ENCODE measurements at regions of chr4 and their contacts with region 1.

Region 1: GRCh38 chr4:99462875-99463464 is 27.8 kb upstream of the ADH7 start:
- DNase-seq: peak; percentile 70
- ATAC-seq: peak; percentile 84
- H3K4me3 Mint-ChIP-seq: no peak overlapping the region
- H3K27ac Mint-ChIP-seq: no peak overlapping the region
- H3K4me1 Mint-ChIP-seq: no peaks in the 10 kb centered on the region
- H3K27me3 Mint-ChIP-seq: no peaks in the 10 kb centered on the region

Region 2: GRCh38 chr4:98150092-98150761 is 1312.7 kb before region 1 on chr4:
- CTCF ChIA-PET with region 1: interaction called, 3 read pairs
- POLR2A ChIA-PET with region 1: no interaction called
- intact Hi-C with region 1: loop called in 1 of 2 experiments (anchors 5 kb)
- DNase-seq: no peak
- ATAC-seq: no peak
- H3K4me3 Mint-ChIP-seq: no peak overlapping the region
- H3K27ac Mint-ChIP-seq: no peak overlapping the region
- H3K4me1 Mint-ChIP-seq: peaks cover 6% of the 10 kb centered on the region
- H3K27me3 Mint-ChIP-seq: peaks cover 2% of the 10 kb centered on the region

Region 3: GRCh38 chr4:99117876-99118693 is 344.9 kb before region 1 on chr4:
- CTCF ChIA-PET with region 1: interaction called, 7 read pairs
- POLR2A ChIA-PET with region 1: no interaction called
- intact Hi-C with region 1: loop called (anchors 1 to 2 kb)
- DNase-seq: no peak
- ATAC-seq: no peak
- H3K4me3 Mint-ChIP-seq: no peak overlapping the region
- H3K27ac Mint-ChIP-seq: no peak overlapping the region
- H3K4me1 Mint-ChIP-seq: no peaks in the 10 kb centered on the region
- H3K27me3 Mint-ChIP-seq: no peaks in the 10 kb centered on the region

Region 4: GRCh38 chr4:99219479-99219878 is 243.5 kb before region 1 on chr4:
- CTCF ChIA-PET with region 1: no interaction called
- POLR2A ChIA-PET with region 1: no interaction called
- intact Hi-C with region 1: no loop called
- DNase-seq: no peak
- ATAC-seq: no peak
- H3K4me3 Mint-ChIP-seq: no peak overlapping the region
- H3K27ac Mint-ChIP-seq: no peak overlapping the region
- H3K4me1 Mint-ChIP-seq: no peaks in the 10 kb centered on the region
- H3K27me3 Mint-ChIP-seq: peaks cover 2% of the 10 kb centered on the region

Region 5: GRCh38 chr4:99447079-99447478 is 15.9 kb before region 1 on chr4:
- CTCF ChIA-PET with region 1: interaction called, 15 read pairs
- POLR2A ChIA-PET with region 1: no interaction called
- intact Hi-C with region 1: no loop called
- DNase-seq: peak; percentile 30
- ATAC-seq: peak; percentile 44
- H3K4me3 Mint-ChIP-seq: no peak overlapping the region
- H3K27ac Mint-ChIP-seq: no peak overlapping the region
- H3K4me1 Mint-ChIP-seq: peaks cover 15% of the 10 kb centered on the region
- H3K27me3 Mint-ChIP-seq: peaks cover 10% of the 10 kb centered on the region

Region 6: GRCh38 chr4:99875072-99875471 is 412.1 kb after region 1 on chr4:
- CTCF ChIA-PET with region 1: no interaction called
- POLR2A ChIA-PET with region 1: no interaction called
- intact Hi-C with region 1: no loop called
- DNase-seq: no peak
- ATAC-seq: no peak
- H3K4me3 Mint-ChIP-seq: no peak overlapping the region
- H3K27ac Mint-ChIP-seq: no peak overlapping the region
- H3K4me1 Mint-ChIP-seq: peaks cover 7% of the 10 kb centered on the region
- H3K27me3 Mint-ChIP-seq: no peaks in the 10 kb centered on the region

Measured in activated CD4-positive, alpha-beta T cell treated with anti-CD3 and anti-CD28 coated beads for 36 hours (primary cell).